ENCODE measurements at regions of chr4 and their contacts with region 1.

Region 1: DNA sequence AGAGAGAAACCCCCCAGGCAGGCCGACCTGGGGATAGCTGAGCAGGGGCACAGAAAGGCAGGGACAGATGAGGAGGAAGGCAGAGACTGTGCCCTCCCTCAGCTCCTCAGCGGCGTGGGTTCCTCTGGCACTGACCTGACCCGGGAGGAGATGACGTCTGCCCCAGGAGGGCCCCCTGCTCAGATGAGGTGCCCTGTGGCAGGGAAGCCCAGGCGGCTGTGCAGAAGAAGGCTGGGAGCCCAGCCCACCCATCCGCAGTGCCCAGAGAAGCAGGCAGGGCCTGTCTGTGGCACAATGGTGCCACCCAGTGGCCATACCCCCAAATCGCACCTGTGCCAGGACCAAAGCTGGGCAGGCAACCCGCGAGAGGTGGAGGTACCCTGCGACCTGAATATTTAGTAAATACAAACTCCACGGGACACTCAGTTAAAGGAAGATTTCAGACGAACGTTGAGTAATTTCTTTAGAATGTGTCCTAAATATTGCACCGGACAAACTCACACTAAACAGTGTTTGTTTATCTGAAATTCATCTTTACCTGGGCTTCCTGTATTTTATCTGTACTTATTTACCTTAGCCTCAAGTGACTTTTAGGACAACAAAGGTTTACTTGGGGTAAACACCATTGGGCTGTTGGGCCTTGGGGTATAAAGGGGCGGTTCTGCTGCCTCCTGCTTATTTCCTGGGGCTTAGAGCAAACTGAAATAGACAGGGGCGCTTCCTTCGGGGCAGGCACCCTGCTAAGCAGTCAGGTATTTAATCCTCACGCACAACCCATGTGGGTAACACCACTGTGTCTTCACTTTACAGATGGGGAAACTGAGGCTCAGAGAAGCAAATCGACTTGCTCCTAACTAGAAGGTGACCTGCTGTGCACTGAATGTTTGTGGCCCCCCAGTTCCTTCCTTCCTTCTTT is 46.5 kb upstream of the HMX1 start:
- DNase-seq: no peak
- H3K4me3 ChIP-seq: no peak overlapping the region
- H3K27ac ChIP-seq: no peak overlapping the region
- H3K4me1 ChIP-seq: no peaks in the 10 kb centered on the region
- H3K27me3 ChIP-seq: peaks cover 0 to 85% (median 0%) of the 10 kb centered on the region in 4 donors
- CTCF ChIP-seq: peak; percentile 49 to 88 (median 75)
- POLR2A ChIP-seq: no peak

Region 2: DNA sequence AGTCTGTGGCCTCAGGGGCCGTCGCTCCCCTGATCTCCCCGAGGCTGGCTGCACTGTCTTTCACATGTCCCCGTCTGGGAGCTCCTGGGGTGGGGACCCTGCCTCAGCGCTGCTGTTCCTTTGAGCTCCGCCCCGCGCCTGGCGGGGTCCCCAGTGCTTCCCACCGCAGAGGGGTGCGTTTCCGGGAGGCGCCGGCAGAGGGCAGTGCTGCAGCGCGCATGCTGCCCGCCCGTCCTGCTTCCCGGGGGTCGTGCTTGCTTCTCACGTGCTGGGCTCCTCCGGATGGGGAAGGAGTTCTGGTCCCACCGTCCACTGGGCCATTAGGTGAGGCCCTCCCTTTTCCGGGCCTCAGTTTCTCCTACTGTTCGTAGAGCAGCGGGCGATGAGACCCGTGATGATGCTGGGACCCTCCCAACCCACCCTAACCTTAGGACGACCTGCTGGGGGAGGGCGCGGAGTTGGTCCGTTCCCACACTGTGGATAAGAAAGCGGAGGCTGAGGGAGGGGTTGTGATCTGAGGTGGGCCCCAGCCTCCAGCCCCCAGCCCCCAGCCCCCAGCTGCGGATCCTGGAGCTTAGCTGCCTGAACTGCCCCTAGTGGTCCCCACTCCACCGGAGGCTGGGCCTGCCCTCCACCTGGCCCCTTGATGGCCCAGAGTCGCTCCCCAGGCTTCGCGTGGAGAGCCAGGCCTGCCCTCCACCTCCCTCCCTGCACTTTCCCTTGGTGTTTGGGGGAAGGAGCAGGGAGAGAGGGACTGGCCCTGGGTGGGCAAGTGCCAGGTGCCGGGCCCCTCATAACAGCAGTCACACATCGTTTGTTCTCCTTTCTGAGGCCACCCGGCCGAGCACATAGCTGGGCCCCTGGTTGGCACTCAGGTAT is 310.3 kb before region 1 on chr4:
- intact Hi-C with region 1: loop called (anchors 10 kb)
- DNase-seq: no peak
- H3K4me3 ChIP-seq: no peak overlapping the region
- H3K27ac ChIP-seq: no peak overlapping the region
- H3K4me1 ChIP-seq: peaks cover 0 to 13% (median 5%) of the 10 kb centered on the region in 3 donors
- H3K27me3 ChIP-seq: peaks cover 0 to 29% (median 0%) of the 10 kb centered on the region in 4 donors
- CTCF ChIP-seq: peak; percentile 53 to 90 (median 74)
- POLR2A ChIP-seq: no peak

Region 3: DNA sequence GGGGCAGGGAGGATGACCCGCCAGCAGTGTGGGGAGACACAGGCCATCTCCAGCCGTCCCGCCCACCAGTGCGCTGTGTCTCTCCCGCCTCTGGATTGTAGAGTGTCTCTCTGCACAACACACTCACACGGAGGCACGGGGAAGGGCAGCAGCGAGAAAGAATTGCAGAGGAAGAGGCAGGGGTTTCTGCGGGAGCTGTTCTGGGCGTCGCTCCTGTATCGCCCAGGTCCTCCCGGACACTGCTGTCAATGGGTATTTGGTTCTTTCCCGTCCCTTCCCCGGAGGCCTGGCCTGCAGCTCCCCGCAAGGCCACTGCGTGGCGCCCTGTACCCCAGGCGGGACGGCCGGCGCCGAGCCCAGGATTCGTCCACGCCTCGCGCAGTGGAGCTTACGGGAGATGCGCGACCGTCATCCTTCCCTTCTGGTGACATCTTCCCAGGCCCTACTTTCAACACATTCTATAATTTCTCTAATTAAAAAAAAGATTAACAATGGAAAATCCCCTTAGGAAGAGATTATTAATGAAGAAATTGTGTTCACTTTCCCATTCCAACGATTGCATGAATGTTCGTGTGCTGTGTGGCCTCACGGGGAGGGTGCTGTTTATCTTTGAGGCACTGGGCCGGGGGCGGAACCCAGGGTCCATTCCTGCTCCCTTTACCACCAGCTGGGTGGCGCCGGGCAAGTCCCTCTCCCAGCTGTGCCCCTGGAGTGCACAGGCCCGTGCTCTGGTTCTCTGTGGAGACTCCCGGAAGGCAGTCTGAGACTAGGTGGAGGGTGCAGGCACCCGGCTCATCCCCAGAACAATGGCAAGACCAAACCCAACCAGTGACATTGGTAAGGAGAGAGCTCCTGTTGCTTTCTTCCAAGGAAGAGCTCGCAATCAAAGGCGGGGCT is 229.8 kb before region 1 on chr4:
- intact Hi-C with region 1: loop called (anchors 10 kb)
- DNase-seq: no peak
- H3K4me3 ChIP-seq: no peak overlapping the region
- H3K27ac ChIP-seq: no peak overlapping the region
- H3K4me1 ChIP-seq: no peaks in the 10 kb centered on the region
- H3K27me3 ChIP-seq: peaks cover 0 to 43% (median 0%) of the 10 kb centered on the region in 4 donors
- CTCF ChIP-seq: peak in 4 of 6 experiments; percentile 45 to 68 (median 48)
- POLR2A ChIP-seq: no peak

Measured in esophagus squamous epithelium (tissue), 5 donors.